ENCODE measurements at regions of chr13 and their contacts with region 1.

Region 1: GRCh38 chr13:43905435-43906031 is 25.8 kb downstream of the LACC1 start:
- DNase-seq: peak; percentile 48
- H3K4me3 ChIP-seq: no peak overlapping the region
- H3K27ac ChIP-seq: no peak overlapping the region
- H3K4me1 ChIP-seq: peaks cover 3% of the 10 kb centered on the region
- H3K27me3 ChIP-seq: no peaks in the 10 kb centered on the region
- CTCF ChIP-seq: peak; percentile 62 to 79

Region 2: GRCh38 chr13:43116242-43116641 is 789.3 kb before region 1 on chr13:
- CTCF ChIA-PET with region 1: no interaction called
- dilution Hi-C with region 1: no loop called
- in situ Hi-C with region 1: no loop called
- intact Hi-C with region 1: no loop called
- DNase-seq: no peak
- H3K4me3 ChIP-seq: no peak overlapping the region
- H3K27ac ChIP-seq: no peak overlapping the region
- H3K4me1 ChIP-seq: no peaks in the 10 kb centered on the region
- H3K27me3 ChIP-seq: no peaks in the 10 kb centered on the region
- CTCF ChIP-seq: peak in 1 of 2 donors; percentile 11

Region 3: DNA sequence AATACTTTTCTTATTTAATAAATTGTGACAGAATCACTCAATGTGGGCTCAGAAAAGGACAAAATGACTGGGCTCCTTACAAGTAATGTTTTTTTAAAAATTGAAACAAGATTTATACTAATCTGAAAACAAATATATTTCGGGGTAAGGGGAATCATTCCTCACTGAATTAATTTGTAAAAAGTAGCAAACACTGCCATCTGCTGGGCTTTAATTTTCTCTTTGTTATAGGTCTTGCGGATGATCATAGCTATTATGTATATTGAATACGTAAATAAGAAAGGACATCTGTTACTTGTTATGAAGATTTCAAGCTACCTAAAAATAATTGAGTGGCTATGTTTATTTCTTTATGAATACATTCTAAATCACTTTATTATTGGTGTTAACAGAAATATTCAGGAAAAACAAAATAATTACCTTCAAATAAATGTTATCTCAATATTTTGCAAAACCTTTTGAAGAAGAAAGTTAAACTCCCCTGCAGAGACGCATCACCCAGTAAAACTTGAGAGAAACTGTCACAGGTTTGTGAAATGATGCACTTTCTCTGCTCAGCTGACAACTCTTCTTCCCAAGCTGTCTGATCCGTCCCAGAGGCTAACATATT is 101.0 kb before region 1 on chr13:
- CTCF ChIA-PET with region 1: no interaction called
- dilution Hi-C with region 1: no loop called
- in situ Hi-C with region 1: no loop called
- intact Hi-C with region 1: no loop called
- DNase-seq: peak; percentile 64
- H3K4me3 ChIP-seq: peak overlapping the region; percentile 39 to 52 (median 40)
- H3K27ac ChIP-seq: peak overlapping the region; percentile 98
- H3K4me1 ChIP-seq: peaks cover 27% of the 10 kb centered on the region
- H3K27me3 ChIP-seq: no peaks in the 10 kb centered on the region
- CTCF ChIP-seq: peak; percentile 35 to 46

Region 4: DNA sequence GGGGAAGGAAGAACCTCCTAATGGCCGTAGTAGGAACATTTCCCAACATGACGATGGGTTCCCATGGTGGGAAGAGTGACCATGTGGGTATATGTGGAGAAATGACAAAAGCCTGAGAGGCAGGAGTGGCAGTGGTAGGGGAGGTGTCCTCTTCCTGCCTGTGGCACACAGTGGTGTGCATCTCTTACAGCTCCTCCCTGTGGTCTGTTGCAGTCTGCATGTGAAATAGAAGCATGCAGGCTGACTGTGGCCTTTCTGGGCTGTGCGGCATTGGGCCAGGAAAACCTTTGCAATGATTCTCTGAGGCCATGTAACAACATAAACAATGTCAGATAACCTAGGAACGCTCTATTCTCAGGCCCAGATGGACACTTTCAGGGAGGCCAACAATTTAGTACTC is 58.2 kb after region 1 on chr13:
- CTCF ChIA-PET with region 1: no interaction called
- dilution Hi-C with region 1: no loop called
- in situ Hi-C with region 1: no loop called
- intact Hi-C with region 1: loop called (anchors 2 kb)
- DNase-seq: no peak
- H3K4me3 ChIP-seq: no peak overlapping the region
- H3K27ac ChIP-seq: no peak overlapping the region
- H3K4me1 ChIP-seq: no peaks in the 10 kb centered on the region
- H3K27me3 ChIP-seq: no peaks in the 10 kb centered on the region
- CTCF ChIP-seq: peak; percentile 7 to 38

Region 5: DNA sequence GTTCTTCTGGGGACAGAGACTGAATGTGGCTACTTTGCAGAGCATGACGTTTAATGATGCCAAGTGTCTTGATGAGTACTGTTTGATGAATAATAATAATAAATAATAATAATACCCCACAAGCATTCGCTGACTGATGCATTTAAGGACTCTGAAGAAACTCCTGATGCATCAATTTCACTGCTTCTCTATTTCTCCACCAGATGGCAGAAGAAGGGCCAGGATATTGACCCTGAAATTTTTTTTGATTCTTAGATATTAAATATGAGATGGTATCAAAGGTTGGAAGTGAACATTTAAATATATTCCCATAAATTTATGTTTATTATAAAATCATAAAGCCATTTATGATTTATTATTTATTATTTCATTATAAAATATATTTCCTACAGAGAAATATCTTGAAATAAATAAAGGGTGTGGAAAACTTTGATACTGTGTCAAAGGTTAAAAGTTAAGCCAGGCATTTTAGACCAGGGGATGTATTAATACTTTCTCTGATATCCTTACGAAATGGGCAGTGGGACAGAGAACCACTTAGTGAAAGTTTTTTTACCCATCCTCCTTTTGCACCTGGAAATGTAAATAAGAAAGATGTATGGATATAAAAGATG is 145.0 kb after region 1 on chr13:
- CTCF ChIA-PET with region 1: interaction called, 3 read pairs
- dilution Hi-C with region 1: no loop called
- in situ Hi-C with region 1: loop called (anchors 10 kb)
- intact Hi-C with region 1: loop called (anchors 1 kb)
- DNase-seq: peak; percentile 20
- H3K4me3 ChIP-seq: no peak overlapping the region
- H3K27ac ChIP-seq: no peak overlapping the region
- H3K4me1 ChIP-seq: peaks cover 5% of the 10 kb centered on the region
- H3K27me3 ChIP-seq: no peaks in the 10 kb centered on the region
- CTCF ChIP-seq: peak; percentile 66 to 77

Region 6: GRCh38 chr13:44231786-44232516 is 326.4 kb after region 1 on chr13:
- CTCF ChIA-PET with region 1: no interaction called
- dilution Hi-C with region 1: no loop called
- in situ Hi-C with region 1: no loop called
- intact Hi-C with region 1: loop called (anchors 2 kb)
- DNase-seq: peak; percentile 98
- H3K4me3 ChIP-seq: no peak overlapping the region
- H3K27ac ChIP-seq: peak overlapping the region; percentile 70
- H3K4me1 ChIP-seq: peaks cover 17% of the 10 kb centered on the region
- H3K27me3 ChIP-seq: no peaks in the 10 kb centered on the region
- CTCF ChIP-seq: peak in 1 of 2 donors; percentile 53

Region 7: DNA sequence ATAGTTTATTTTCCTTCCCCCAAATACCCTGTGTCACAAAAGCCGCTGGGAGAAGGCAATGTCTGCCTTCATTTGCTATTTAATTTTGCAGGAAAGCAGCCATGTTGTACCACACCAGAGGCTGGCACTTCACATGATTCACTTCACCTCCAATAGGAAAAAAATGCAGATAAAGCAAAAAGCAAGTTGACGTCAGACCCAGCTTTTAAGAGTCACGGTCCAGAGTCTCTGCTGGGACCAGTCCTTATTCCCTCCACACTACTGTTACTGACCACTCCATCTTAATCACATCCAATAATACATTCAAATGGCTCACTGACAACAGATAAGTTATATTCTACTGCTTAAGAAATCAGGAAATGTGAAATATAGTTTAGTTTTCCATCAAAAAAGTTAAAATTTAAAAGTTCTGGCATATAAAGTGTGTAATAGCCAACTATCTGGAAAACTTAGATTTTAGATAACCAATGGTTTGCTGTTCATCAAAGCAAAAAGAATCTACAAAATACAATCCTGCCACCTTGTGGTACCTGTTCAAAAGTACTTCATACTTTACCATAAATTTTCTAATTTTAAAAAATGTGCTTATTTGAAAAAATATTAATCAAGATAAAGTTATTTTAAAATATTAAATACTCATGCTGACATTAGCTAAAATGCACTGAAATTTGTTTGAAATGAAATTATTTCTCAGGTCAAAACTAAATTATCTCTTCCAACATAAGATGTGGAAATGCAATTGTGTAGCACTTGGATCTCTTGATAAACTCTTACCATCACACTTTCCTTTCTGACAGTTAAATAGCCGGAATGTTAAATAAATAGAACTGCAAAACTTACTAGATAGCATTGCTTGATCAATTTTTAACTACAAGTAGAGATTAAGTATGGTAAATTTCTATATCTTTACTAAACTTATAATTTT is 565.4 kb after region 1 on chr13:
- CTCF ChIA-PET with region 1: interaction called, 4 read pairs
- dilution Hi-C with region 1: no loop called
- in situ Hi-C with region 1: loop called (anchors 10 kb)
- intact Hi-C with region 1: loop called (anchors 1 kb)
- DNase-seq: no peak
- H3K4me3 ChIP-seq: no peak overlapping the region
- H3K27ac ChIP-seq: no peak overlapping the region
- H3K4me1 ChIP-seq: peaks cover 3% of the 10 kb centered on the region
- H3K27me3 ChIP-seq: no peaks in the 10 kb centered on the region
- CTCF ChIP-seq: peak; percentile 51 to 52

Region 8: DNA sequence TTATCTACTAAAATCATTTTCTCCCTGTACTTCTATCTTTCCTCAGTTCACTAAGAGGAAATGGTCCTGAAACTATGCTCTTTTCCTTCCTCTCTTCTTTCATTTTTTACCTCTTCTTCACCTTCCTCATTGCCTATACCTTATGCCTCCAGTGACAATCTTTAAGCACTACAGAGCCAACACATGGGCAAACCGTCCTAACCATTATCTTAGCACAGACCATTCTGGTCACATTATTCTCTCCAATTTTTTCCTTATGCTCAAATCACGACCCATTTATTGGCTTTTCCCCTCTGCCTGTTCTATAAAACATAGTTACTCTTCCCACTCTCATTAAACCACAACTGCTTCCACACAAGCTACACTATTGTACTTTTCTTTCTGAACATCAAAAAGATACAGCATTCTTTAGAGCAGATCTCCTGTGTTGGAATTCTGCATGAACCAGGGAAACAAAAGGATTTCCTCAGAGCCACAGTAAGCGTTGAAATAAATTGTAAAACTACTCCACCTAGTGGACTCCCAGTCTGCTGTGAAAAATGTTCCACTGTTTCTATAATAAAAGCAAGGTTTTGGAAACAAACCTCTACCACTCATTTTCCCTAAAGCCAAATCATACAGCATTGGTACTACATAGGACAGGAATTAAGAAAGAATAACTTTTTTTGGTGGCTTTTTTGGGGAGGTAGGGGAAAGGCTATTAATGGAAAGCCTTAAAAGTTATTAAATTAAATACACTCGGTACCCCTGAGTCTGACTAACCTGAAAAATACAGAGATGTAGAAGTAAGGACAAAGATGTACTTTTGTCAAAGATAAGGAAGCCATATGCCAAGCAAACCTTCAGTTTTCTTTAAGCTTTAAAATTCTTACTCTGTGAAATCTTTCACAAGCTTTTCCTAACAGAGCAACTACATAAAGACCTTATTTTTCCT is 1064.3 kb after region 1 on chr13:
- CTCF ChIA-PET with region 1: no interaction called
- dilution Hi-C with region 1: no loop called
- in situ Hi-C with region 1: loop called in 1 of 2 experiments (anchors 25 kb)
- intact Hi-C with region 1: loop called (anchors 1 kb)
- DNase-seq: peak; percentile 28
- H3K4me3 ChIP-seq: no peak overlapping the region
- H3K27ac ChIP-seq: no peak overlapping the region
- H3K4me1 ChIP-seq: peaks cover 3% of the 10 kb centered on the region
- H3K27me3 ChIP-seq: no peaks in the 10 kb centered on the region
- CTCF ChIP-seq: peak; percentile 68 to 72

Region 9: DNA sequence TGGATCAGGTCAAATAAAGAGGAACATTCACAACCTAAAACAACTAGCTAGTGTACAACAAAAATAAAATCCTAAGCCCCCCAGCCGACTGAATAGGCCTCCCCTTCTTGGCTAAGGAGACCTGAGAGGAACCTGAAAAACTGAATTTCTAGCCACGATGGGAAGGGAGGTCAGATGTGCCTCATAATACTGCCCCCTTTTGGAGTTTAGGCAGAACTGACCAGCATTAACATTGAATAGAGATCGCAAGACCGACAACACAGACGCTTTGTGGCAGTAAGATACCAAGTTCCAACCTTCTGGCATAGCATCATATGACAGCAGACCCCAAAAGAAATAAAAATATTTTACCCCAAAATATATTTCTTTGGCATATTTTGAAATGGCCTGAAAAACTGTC is 1812.5 kb after region 1 on chr13:
- CTCF ChIA-PET with region 1: no interaction called
- dilution Hi-C with region 1: no loop called
- in situ Hi-C with region 1: no loop called
- intact Hi-C with region 1: loop called (anchors 10 kb)
- DNase-seq: peak; percentile 9
- H3K4me3 ChIP-seq: no peak overlapping the region
- H3K27ac ChIP-seq: no peak overlapping the region
- H3K4me1 ChIP-seq: no peaks in the 10 kb centered on the region
- H3K27me3 ChIP-seq: no peaks in the 10 kb centered on the region
- CTCF ChIP-seq: peak; percentile 69 to 79